A549 (cell line): ENCODE measurements at regions of chr5 and their contacts with region 1.

Region 1: DNA sequence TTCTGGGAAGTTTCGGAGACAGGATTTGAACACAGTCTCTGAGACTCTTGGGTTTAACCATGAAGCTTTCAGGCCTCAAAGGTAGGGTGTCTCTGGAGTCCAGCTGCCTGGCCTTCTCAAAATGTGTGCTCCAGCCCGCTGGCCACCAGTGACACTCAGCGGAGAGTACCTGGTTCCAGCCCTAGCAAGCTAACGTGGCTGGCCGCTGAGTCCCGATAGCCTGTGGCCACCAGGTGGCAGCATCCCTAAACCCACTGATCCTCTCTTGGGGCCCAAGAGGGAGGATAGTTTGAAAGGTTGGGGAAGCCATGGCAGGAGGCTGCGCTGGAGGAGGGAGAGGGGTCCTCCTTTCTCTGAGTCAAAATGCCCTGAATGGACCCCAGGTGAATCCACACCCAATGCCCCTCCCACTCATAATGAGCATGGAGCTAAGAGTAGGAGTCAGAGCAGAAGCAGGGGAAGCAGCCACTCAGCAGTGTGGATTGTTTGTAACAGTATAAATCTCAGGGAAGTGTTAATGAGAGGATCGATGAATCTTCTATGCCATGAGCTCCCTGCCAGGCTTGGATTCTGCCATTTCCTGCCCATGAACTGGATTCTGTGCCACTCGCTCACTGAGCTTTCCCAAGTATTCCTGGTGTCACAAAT is 5.4 kb upstream of the TIFAB start:
- DNase-seq: peak; percentile 74 to 89
- ATAC-seq: peak; percentile 70 to 92
- H3K4me3 ChIP-seq: no peak overlapping the region
- H3K27ac ChIP-seq: no peak overlapping the region
- H3K4me1 ChIP-seq: peaks cover 10% of the 10 kb centered on the region; the same call in 2 of the 3 replicates
- CTCF ChIP-seq: peak; percentile 74
- EP300 ChIP-seq: no peak
- POLR2A ChIP-seq: no peak
- RAD21 ChIP-seq: peak; percentile 38 to 49; a peak in 4 of 5 replicates

Region 2: DNA sequence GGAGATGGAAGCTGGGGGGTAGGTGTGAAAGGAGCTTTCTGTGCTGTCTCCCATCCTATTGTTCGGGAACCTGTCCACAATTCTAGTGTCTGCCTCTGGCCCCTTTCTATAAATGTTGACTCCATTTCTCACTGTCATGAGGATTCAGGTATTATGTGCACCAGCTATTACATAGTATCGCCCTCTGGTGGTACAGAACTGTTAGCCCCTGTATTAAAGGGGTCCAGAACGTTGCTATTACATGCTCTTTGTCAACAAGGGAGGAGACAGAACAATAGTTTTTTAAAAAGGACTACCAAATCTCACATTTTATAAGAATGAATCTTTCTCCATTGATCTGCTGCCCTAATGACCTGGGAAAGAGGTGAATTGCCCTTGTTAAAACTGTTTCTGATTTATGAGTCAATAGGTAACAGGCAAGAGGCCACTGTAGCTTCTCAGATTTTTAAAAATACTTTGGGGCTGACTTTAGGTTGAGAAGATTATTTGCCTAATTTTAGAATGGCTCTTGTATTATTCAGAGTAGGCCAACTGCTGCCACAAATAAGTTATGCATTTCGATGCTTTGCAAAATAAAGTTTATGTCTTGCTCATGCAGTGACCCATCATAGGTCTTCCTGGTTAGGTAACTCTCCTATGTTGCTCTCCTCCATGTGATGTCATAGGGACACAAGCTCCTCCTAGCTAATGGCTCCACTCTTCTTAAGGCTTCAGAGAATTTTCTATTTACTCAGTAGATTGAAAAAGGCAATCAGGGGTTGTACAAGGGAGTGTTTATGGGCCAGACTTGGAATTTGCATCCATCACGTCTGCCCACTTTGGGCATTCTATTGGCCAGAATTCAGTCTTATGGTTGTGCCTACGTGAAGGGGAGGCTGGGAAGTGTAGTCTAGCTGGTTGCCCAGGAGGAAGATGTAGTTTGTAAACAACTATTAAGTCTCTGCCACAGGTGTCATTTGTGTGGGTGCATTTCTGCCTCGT is 31.2 kb before region 1 on chr5:
- CTCF ChIA-PET with region 1: interaction called, 13 read pairs
- POLR2A ChIA-PET with region 1: no interaction called
- DNase-seq: peak; percentile 63 to 65
- ATAC-seq: peak; percentile 89 to 96
- H3K4me3 ChIP-seq: no peak overlapping the region
- H3K27ac ChIP-seq: no peak overlapping the region
- H3K4me1 ChIP-seq: peaks cover 8% of the 10 kb centered on the region; the same call in 2 of the 3 replicates
- CTCF ChIP-seq: peak; percentile 48
- EP300 ChIP-seq: no peak
- POLR2A ChIP-seq: no peak
- RAD21 ChIP-seq: peak; percentile 30 to 52; a peak in 3 of 5 replicates

Region 3: GRCh38 chr5:135437796-135438560 is 19.6 kb before region 1 on chr5:
- CTCF ChIA-PET with region 1: interaction called, 31 read pairs
- POLR2A ChIA-PET with region 1: no interaction called
- DNase-seq: no peak
- ATAC-seq: no peak; a peak in 1 of 6 replicates
- H3K4me3 ChIP-seq: no peak overlapping the region
- H3K27ac ChIP-seq: no peak overlapping the region
- H3K4me1 ChIP-seq: no peaks in the 10 kb centered on the region
- CTCF ChIP-seq: no peak
- EP300 ChIP-seq: no peak
- POLR2A ChIP-seq: no peak
- RAD21 ChIP-seq: no peak

Region 4: DNA sequence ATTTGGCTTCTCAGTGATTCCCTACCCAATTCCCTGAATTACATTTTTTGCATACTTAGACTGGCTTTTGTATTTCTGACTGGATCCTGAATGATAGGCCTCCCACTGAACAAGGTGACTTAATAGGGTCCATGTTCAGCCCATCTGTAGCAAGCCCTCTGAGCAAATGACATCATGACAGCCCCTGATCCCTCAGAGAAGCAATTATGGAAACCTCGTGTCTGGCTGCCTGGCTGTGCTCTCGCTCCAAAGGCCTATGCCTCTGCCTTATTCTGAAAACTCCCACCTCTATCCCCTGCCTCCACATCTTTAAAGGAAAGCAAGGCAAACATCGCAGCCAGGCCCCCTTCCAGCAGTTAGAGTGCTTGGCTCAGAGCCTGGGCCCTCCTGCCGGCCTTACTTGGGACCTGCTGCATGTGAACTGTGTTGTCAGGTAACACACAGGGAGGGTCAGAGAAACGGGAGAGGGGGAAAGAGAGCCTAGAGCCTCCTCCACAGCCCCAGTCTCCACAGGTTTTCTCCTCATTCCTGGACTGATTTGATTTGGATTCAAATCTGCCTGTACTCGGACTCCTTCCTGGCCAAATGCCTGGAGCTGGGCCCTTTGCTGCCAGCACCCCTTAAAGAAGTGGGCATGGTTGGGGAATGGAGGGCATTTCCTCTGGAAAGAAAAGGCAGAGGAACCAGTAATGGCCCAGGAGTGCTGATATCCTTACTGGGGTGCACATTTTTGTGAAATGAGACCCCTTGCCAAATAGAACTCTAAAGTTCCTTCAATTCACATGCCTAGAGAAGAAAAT is 14.2 kb before region 1 on chr5:
- CTCF ChIA-PET with region 1: interaction called, 62 read pairs
- POLR2A ChIA-PET with region 1: no interaction called
- DNase-seq: no peak
- ATAC-seq: no peak
- H3K4me3 ChIP-seq: no peak overlapping the region
- H3K27ac ChIP-seq: no peak overlapping the region
- H3K4me1 ChIP-seq: no peaks in the 10 kb centered on the region
- CTCF ChIP-seq: no peak
- EP300 ChIP-seq: no peak
- POLR2A ChIP-seq: no peak
- RAD21 ChIP-seq: no peak

Region 5: DNA sequence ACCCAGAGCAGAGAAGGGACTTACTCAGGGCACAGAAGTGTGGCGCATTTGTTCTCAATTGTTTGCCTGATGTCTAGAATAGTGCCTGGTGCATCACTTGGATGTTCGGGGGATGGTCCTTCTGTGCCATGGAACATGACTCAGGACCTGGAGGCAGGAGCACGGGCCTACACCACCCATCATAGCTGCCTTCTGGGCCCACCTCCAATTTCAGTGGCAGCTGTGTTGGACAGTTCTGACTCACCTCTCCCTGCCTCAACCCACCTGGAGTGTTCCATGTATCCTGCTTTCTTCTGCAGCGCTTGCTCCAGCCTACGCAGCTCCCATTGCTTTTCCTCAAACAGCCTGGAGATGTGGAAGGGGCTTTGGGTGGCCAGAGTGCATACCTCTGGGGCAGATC is 133.7 kb after region 1 on chr5:
- CTCF ChIA-PET with region 1: no interaction called
- POLR2A ChIA-PET with region 1: no interaction called
- DNase-seq: no peak
- ATAC-seq: no peak
- H3K4me3 ChIP-seq: no peak overlapping the region
- H3K27ac ChIP-seq: no peak overlapping the region
- H3K4me1 ChIP-seq: no peaks in the 10 kb centered on the region
- CTCF ChIP-seq: no peak
- EP300 ChIP-seq: no peak
- POLR2A ChIP-seq: no peak
- RAD21 ChIP-seq: no peak